PC-3 (cell line): ENCODE measurements at regions of chrX and their contacts with region 1.

Region 1: DNA sequence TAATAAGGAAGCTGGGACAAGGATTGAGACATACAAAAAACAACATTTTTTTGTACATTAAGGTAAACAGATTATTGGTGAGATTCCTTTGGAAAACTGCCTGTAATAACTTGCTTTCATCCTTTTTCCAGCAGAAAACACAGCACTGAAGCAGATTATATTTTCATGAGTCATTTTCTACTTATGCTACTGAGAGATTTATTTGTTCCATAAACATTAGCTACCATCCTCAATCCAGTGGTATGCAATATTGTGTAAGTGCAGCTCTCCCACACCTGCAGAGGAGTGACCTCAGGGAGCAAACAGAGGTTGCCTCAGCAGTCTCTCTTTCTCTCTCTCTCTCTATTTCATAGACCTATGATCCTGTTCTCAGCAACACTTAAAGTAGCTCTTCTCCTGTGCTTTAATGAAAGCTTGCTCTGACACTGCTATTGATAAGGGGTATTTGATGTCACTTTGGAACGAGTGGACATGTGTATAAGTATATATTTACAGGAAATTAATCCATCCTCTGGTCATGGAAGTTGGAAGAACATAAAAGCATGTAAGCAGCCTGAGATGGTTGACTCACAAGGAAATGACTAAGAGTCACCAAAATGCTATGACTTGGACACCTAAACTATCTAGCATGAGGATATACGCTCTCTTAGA is 163.7 kb upstream of the SPANXC start:
- DNase-seq: peak; percentile 87
- ATAC-seq: peak; percentile 88
- H3K4me3 ChIP-seq: peak overlapping the region; percentile 47; the same call in 1 of the 2 replicates
- H3K27ac ChIP-seq: peak overlapping the region; percentile 98
- H3K4me1 ChIP-seq: peaks cover 38% of the 10 kb centered on the region
- H3K27me3 ChIP-seq: no peaks in the 10 kb centered on the region
- CTCF ChIP-seq: no peak

Region 2: DNA sequence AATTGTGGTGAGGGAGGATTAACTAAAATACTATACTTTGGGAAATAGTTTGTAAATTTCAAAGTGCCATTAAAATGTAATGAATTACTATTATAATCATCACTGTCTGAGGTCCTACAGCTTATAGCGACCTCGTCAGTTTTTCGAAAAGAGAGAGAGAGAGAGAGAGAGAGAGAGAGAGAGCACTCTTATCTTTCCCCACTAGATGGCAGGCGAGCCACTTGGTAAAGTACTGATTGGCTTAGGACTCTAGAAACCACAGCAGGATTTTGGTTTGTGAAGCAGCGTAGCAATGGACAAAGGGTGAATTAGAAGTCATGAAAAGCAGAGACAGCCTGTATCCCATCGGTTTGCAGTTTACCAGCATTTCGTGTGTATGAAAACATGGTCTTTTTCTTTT is 643.9 kb before region 1 on chrX:
- CTCF ChIA-PET with region 1: no interaction called
- POLR2A ChIA-PET with region 1: no interaction called
- intact Hi-C with region 1: loop called (anchors 5 kb)
- DNase-seq: peak; percentile 73
- ATAC-seq: peak; percentile 50
- H3K4me3 ChIP-seq: no peak overlapping the region
- H3K27ac ChIP-seq: no peak overlapping the region
- H3K4me1 ChIP-seq: no peaks in the 10 kb centered on the region; the same call in 1 of the 2 replicates
- H3K27me3 ChIP-seq: no peaks in the 10 kb centered on the region
- CTCF ChIP-seq: peak; percentile 84

Region 3: GRCh38 chrX:141220344-141221035 is 185.5 kb before region 1 on chrX:
- CTCF ChIA-PET with region 1: no interaction called
- POLR2A ChIA-PET with region 1: no interaction called
- intact Hi-C with region 1: loop called (anchors 5 kb)
- DNase-seq: peak; percentile 92
- ATAC-seq: peak; percentile 72
- H3K4me3 ChIP-seq: no peak overlapping the region; the same call in 1 of the 2 replicates
- H3K27ac ChIP-seq: peak overlapping the region; percentile 93
- H3K4me1 ChIP-seq: peaks cover 34% of the 10 kb centered on the region
- H3K27me3 ChIP-seq: no peaks in the 10 kb centered on the region
- CTCF ChIP-seq: no peak

Region 4: DNA sequence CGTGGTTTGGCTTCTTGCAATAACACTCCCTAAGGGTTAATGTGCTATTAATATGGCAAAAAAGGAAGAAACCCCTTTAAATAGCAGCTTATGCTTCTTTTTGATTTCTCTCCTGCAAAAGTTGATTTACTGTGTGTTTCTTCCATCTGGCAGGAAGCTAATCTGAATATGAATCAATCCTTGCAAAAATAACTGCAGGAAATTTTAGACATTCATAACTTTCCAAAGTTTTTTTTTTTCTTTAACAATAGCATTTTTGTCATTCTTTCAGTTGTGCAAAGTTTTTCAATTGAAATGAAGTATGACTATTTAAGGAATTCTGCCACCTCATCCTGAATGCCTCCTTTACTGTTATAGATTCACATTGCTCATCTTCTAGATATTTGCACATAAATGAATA is 63.0 kb after region 1 on chrX:
- CTCF ChIA-PET with region 1: interaction called, 6 read pairs
- POLR2A ChIA-PET with region 1: no interaction called
- intact Hi-C with region 1: loop called (anchors 1 kb)
- DNase-seq: peak; percentile 85
- ATAC-seq: peak; percentile 76
- H3K4me3 ChIP-seq: no peak overlapping the region
- H3K27ac ChIP-seq: peak overlapping the region; percentile 85
- H3K4me1 ChIP-seq: peaks cover 33% of the 10 kb centered on the region
- H3K27me3 ChIP-seq: no peaks in the 10 kb centered on the region
- CTCF ChIP-seq: no peak

Region 5: GRCh38 chrX:141924293-141924692 is 518.3 kb after region 1 on chrX:
- CTCF ChIA-PET with region 1: no interaction called
- POLR2A ChIA-PET with region 1: interaction called, 3 read pairs
- intact Hi-C with region 1: loop called (anchors 10 kb)
- DNase-seq: peak; percentile 52
- ATAC-seq: peak; percentile 79
- H3K4me3 ChIP-seq: no peak overlapping the region
- H3K27ac ChIP-seq: no peak overlapping the region
- H3K4me1 ChIP-seq: peaks cover 14% of the 10 kb centered on the region
- H3K27me3 ChIP-seq: no peaks in the 10 kb centered on the region
- CTCF ChIP-seq: no peak